ENCODE measurements at regions of chr3 and their contacts with region 1.

Region 1: GRCh38 chr3:120795017-120795648 is 52.6 kb downstream of the GTF2E1 start:
- DNase-seq: no peak
- H3K4me3 ChIP-seq: no peak overlapping the region
- CTCF ChIP-seq: peak; percentile 75

Region 2: GRCh38 chr3:120245386-120245785 is 549.7 kb before region 1 on chr3:
- CTCF ChIA-PET with region 1: interaction called, 14 read pairs
- POLR2A ChIA-PET with region 1: no interaction called
- DNase-seq: no peak
- H3K4me3 ChIP-seq: no peak overlapping the region
- CTCF ChIP-seq: no peak

Region 3: GRCh38 chr3:120682095-120682681 is 112.9 kb before region 1 on chr3 and contains the start of gene HGD:
- CTCF ChIA-PET with region 1: interaction called, 17 read pairs
- POLR2A ChIA-PET with region 1: no interaction called
- DNase-seq: no peak
- H3K4me3 ChIP-seq: no peak within 1 kb of the TSS
- CTCF ChIP-seq: no peak

Region 4: GRCh38 chr3:120743556-120744195 is 51.5 kb before region 1 on chr3:
- CTCF ChIA-PET with region 1: interaction called, 13 read pairs
- POLR2A ChIA-PET with region 1: no interaction called
- DNase-seq: no peak
- H3K4me3 ChIP-seq: peak overlapping the region; percentile 88
- CTCF ChIP-seq: no peak

Region 5: GRCh38 chr3:120773932-120774331 is 21.2 kb before region 1 on chr3:
- CTCF ChIA-PET with region 1: interaction called, 48 read pairs
- POLR2A ChIA-PET with region 1: interaction called, 3 read pairs
- DNase-seq: no peak
- H3K4me3 ChIP-seq: no peak overlapping the region
- CTCF ChIP-seq: no peak

Region 6: GRCh38 chr3:120816728-120817127 is 21.6 kb after region 1 on chr3:
- CTCF ChIA-PET with region 1: interaction called, 17 read pairs
- POLR2A ChIA-PET with region 1: no interaction called
- DNase-seq: no peak
- H3K4me3 ChIP-seq: no peak overlapping the region
- CTCF ChIP-seq: no peak